Activated CD4-positive, alpha-beta T cell treated with anti-CD3 and anti-CD28 coated beads, Interleukin-2, amount 10 ng/mL, durations not matched to agents 24 days and 14 days (primary cell): ENCODE measurements at regions of chr2 and their contacts with region 1.

Region 1: GRCh38 chr2:196926562-196927375 is at the start of gene PGAP1:
- DNase-seq: peak; percentile 97
- H3K4me3 Mint-ChIP-seq: peak within 1 kb of the TSS; percentile 100
- H3K27ac Mint-ChIP-seq: peak within 1 kb of the TSS; percentile 100
- H3K4me1 Mint-ChIP-seq: peaks cover 46% of the 10 kb centered on the region
- H3K27me3 Mint-ChIP-seq: no peaks in the 10 kb centered on the region
- total RNA-seq, gene PGAP1: 22.6 and 27.1 TPM in 2 replicates

Region 2: DNA sequence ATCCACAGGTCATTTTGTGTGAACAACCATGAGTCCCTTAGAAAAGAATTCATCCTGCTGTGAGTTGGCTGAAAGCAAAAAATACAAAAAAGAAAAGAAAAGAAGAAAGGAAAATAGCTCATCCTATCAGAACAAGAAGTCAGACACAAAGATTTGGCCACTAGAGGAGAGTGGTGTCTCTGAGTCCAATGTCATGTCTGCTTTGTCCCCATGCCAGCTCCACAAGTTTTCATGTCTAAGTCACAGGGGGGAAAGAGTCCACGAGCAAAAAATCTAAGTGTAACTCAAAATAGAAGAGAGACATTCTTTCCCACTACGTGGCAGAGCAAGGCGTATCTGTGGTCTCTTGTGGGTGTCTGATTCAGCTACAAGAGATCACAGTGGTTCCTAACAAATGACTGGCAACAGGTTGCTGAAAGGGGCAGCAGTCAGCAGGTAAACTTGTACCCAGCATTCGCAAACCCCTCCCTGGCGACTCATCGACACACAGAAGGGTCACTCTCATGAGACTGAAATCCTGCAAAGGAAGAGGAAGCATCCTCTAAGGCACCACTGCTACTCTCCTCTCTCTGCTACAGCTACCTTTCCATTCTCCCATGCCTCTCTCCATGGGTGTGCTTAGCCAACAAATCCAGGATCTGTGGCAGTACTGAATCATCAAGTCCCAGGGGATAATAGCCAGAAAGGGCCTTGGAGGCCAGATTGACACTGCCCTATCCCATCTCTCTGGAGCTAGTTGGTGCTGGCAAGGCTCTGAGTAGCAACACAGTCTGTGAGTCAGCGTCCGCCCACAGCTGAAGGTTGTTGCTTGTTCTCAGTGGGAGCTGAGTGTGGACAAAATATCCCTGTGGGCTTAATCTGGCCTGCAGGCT is 1392.8 kb before region 1 on chr2:
- intact Hi-C with region 1: loop called (anchors 10 kb)
- DNase-seq: peak; percentile 89
- H3K4me3 Mint-ChIP-seq: peak overlapping the region; percentile 87
- H3K27ac Mint-ChIP-seq: peak overlapping the region; percentile 99
- H3K4me1 Mint-ChIP-seq: peaks cover 72% of the 10 kb centered on the region
- H3K27me3 Mint-ChIP-seq: no peaks in the 10 kb centered on the region

Region 3: DNA sequence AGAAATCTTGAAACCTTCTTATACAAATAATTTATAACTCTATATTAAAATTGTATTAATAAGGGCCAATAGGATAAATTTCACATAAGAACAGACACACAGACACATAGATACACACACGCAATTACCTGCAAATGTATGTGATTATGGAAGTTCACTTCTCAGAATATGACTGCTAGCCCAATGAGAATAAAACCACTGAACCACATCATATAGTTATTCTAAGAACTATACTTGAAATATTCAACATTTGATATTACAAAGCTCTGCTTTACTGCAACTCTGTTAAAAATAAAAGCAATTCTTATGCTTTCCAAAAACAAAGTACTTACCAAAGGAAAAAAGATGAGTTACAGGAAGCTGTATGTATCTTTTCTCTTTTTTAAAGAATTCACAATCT is 51.4 kb before region 1 on chr2:
- intact Hi-C with region 1: loop called (anchors 10 kb)
- DNase-seq: no peak
- H3K4me3 Mint-ChIP-seq: no peak overlapping the region
- H3K27ac Mint-ChIP-seq: no peak overlapping the region
- H3K4me1 Mint-ChIP-seq: peaks cover 24% of the 10 kb centered on the region
- H3K27me3 Mint-ChIP-seq: no peaks in the 10 kb centered on the region

Region 4: GRCh38 chr2:196987649-196988364 is 61.0 kb after region 1 on chr2:
- intact Hi-C with region 1: loop called (anchors 1 kb)
- DNase-seq: peak; percentile 82
- H3K4me3 Mint-ChIP-seq: peak overlapping the region; percentile 55
- H3K27ac Mint-ChIP-seq: peak overlapping the region; percentile 93
- H3K4me1 Mint-ChIP-seq: peaks cover 37% of the 10 kb centered on the region
- H3K27me3 Mint-ChIP-seq: no peaks in the 10 kb centered on the region

Region 5: GRCh38 chr2:197079832-197080555 is 153.2 kb after region 1 on chr2:
- intact Hi-C with region 1: no loop called
- DNase-seq: no peak
- H3K4me3 Mint-ChIP-seq: no peak overlapping the region
- H3K27ac Mint-ChIP-seq: no peak overlapping the region
- H3K4me1 Mint-ChIP-seq: peaks cover 4% of the 10 kb centered on the region
- H3K27me3 Mint-ChIP-seq: no peaks in the 10 kb centered on the region

Region 6: GRCh38 chr2:197255543-197255942 is 328.8 kb after region 1 on chr2:
- intact Hi-C with region 1: loop called (anchors 5 kb)
- DNase-seq: peak; percentile 94
- H3K4me3 Mint-ChIP-seq: peak overlapping the region; percentile 81
- H3K27ac Mint-ChIP-seq: peak overlapping the region; percentile 96
- H3K4me1 Mint-ChIP-seq: peaks cover 60% of the 10 kb centered on the region
- H3K27me3 Mint-ChIP-seq: no peaks in the 10 kb centered on the region

Region 7: GRCh38 chr2:197499594-197500526 is 573.1 kb after region 1 on chr2 and contains the starts of genes HSPD1 and HSPE1:
- intact Hi-C with region 1: loop called (anchors 2 kb)
- DNase-seq: peak; percentile 99
- H3K4me3 Mint-ChIP-seq: peak within 1 kb of the TSS; percentile 95
- H3K27ac Mint-ChIP-seq: peak within 1 kb of the TSS; percentile 98
- H3K4me1 Mint-ChIP-seq: peaks cover 41% of the 10 kb centered on the region
- H3K27me3 Mint-ChIP-seq: no peaks in the 10 kb centered on the region
- total RNA-seq, gene HSPD1: 984 and 999 TPM in 2 replicates
- total RNA-seq, gene HSPE1: 409 and 411 TPM in 2 replicates